Activated naive CD4-positive, alpha-beta T cell treated with anti-CD3 and anti-CD28 coated beads, Interleukin-2, amount 10 ng/mL, durations not matched to agents 7 days and 5 days (primary cell): ENCODE measurements at regions of chr22 and their contacts with region 1.

Region 1: GRCh38 chr22:31272522-31273446 is 19.5 kb downstream of the PIK3IP1 start:
- DNase-seq: peak; percentile 71
- H3K4me3 Mint-ChIP-seq: no peak overlapping the region
- H3K27ac Mint-ChIP-seq: no peak overlapping the region
- H3K4me1 Mint-ChIP-seq: peaks cover 37% of the 10 kb centered on the region
- H3K27me3 Mint-ChIP-seq: no peaks in the 10 kb centered on the region

Region 2: DNA sequence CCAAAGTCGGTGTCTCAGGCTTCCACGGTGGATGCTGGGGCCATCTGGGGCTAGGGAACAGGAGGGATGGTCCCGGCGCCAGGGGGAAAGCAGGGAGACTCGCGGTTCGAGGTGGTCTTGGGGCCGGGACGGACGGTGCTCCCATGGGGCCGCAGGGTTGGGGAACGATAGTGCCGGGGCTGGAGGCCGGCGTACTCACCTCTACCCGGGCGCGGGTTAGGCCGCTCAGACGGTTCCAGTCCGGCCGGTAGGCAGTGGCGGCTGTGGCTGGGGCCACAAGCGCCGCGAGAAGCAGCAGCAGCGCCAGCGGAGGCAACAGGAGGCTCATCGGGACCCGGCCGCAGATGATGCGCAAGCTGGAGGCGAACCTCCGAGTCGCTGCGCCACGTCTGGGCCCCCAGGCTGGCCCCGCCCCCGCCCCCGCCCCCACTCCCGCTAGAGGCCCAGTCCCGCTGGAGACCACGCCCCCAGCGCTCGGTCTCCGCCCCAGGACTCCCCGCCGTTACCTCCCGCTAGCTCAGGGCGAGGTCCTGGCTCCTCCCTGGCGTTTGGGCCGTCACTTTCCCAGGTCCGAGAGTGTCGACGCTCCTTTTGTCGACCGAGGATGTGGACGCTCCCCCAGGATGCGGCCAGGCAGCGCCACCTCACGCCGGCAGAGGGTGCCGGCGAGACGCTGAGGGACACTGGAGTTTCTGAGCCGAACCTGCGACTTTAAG is 165.4 kb before region 1 on chr22 and contains the start of gene SELENOM:
- CTCF ChIA-PET with region 1: interaction called, 10 read pairs
- DNase-seq: peak; percentile 94
- H3K4me3 Mint-ChIP-seq: peak within 1 kb of the TSS; percentile 79
- H3K27ac Mint-ChIP-seq: no peak within 1 kb of the TSS
- H3K4me1 Mint-ChIP-seq: peaks cover 16% of the 10 kb centered on the region
- H3K27me3 Mint-ChIP-seq: peaks cover 24% of the 10 kb centered on the region

Region 3: GRCh38 chr22:31223786-31224191 is 49.0 kb before region 1 on chr22:
- CTCF ChIA-PET with region 1: interaction called, 10 read pairs
- DNase-seq: no peak
- H3K4me3 Mint-ChIP-seq: no peak overlapping the region
- H3K27ac Mint-ChIP-seq: no peak overlapping the region
- H3K4me1 Mint-ChIP-seq: peaks cover 32% of the 10 kb centered on the region
- H3K27me3 Mint-ChIP-seq: no peaks in the 10 kb centered on the region

Region 4: DNA sequence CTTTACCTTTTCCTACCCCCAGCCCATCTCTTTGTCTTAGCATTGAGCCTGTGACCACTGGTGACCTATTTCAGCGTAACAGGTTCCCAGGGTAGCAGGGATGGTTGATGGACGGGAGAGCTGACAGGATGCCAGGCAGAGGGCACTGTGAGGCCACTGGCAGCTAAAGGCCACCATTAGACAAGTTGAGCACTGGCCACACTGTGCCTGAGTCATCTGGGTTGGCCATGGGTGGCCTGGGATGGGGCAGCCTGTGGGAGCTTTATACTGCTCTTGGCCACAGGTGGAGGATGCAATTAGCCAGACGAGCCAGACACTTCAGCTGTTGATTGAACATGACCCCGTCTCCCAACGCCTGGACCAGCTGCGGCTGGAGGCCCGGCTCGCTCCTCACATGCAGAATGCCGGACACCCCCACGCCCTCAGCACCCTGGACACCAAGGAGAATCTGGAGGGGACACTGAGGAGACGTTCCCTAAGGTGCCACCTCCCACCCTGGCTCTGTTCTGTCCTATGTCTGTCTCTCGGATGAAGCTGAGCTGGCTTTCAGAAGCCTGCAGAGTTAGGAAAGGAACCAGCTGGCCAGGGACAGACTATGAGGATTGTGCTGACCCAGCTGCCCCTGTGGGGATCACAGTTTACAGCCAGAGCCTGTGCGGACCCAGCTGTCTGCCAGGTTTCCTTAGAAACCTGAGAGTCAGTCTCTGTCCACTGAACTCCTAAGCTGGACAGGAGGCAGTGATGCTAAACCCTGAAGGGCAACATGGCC is 10.3 kb before region 1 on chr22:
- CTCF ChIA-PET with region 1: interaction called, 16 read pairs
- DNase-seq: no peak
- H3K4me3 Mint-ChIP-seq: no peak overlapping the region
- H3K27ac Mint-ChIP-seq: no peak overlapping the region
- H3K4me1 Mint-ChIP-seq: no peaks in the 10 kb centered on the region
- H3K27me3 Mint-ChIP-seq: no peaks in the 10 kb centered on the region

Region 5: DNA sequence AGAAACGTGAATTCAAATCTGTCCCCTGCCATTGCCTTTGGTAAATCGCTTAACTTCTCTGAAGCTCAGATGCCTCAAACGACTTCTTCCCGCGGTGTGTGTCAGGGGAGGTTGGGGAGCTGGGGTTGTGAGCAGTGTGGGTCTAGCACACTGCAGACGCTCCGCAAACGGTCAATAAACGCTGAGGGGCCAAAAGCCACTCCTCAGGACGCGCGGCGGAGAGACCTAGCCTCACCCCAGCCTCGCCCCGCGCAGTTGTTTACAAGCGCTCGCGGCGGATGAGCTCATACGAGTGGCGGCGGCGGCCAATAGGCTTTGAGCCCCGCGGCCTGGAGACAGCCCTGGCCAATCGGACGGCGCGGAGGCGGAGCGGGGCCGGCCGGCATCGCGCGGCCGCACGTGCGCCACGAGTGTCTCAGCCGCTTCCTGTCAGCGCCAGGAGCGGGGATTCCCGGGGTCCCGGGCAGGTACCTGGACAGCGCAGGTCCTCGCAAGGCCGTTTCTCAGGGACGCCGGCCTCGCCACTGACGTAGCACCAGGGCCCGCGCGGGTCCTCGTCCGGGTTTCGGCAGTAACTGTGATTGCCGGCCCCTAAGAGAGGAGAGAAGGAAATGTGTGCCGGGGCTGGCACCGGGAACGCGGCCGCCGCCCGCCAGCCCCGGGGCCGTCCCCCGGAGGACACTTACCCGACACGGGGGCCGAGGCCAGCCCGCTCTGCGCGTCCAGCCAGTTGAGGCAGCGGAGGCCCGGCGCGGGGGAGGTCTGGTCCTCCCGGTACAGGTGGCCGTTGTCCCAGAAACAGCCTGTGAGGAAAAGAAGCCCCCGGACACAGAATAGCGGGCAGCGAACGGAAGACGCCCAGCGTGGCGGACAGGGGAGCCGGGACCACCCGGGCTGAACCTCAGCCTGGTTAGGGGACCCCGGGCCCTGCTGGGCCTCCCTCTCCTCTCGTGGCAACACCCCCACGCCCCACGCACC is 18.0 kb after region 1 on chr22:
- CTCF ChIA-PET with region 1: interaction called, 29 read pairs
- DNase-seq: peak; percentile 97
- H3K4me3 Mint-ChIP-seq: peak overlapping the region; percentile 99
- H3K27ac Mint-ChIP-seq: peak overlapping the region; percentile 99
- H3K4me1 Mint-ChIP-seq: peaks cover 72% of the 10 kb centered on the region
- H3K27me3 Mint-ChIP-seq: peaks cover 4% of the 10 kb centered on the region